ENCODE measurements at regions of chr2 and their contacts with region 1.

Region 1: GRCh38 chr2:25131567-25132298 is 36.6 kb downstream of the POMC start:
- DNase-seq: peak; percentile 28 to 58
- ATAC-seq: no peak
- H3K4me3 ChIP-seq: peak overlapping the region; percentile 34
- H3K27ac ChIP-seq: no peak overlapping the region
- H3K4me1 ChIP-seq: no peaks in the 10 kb centered on the region
- H3K27me3 ChIP-seq: no peaks in the 10 kb centered on the region
- CTCF ChIP-seq: no peak

Region 2: DNA sequence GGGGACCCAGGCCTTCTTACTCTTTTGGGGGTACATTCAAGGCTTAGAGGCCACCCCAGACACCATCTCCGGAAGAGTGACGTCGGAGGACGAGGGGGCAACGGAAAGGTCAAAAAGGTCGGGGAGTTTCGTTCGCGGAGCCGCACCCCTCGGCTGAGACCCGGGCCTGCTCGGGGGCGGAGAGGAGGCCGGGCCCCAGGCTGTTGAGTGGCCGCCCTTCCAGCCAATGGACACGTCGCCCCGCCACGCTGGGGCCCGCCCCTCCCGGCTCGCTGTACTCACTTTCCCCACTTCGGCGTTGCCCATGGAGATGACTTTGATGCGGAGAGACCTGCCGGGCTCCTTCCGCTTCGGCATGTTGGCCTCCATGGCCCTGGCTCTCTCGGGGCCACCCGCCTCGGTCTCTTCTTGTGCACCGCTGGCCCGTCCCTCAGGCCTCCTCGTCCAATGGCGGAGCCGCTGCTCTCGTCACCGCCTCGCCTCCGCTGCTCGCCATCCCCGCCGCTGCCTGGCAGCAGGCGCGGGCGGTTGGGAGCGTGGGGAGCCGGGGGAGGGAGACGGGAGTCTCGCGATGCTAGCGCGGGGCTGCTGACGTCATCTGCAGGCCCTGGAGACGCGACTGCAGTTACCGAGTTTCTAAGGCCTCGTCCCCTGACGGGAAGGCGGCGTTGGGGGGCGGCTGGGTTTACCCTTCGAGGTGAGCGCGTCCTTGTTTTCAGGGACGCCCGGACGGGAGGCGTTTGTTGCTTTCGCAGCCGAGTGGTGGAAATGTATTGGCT is 160.0 kb before region 1 on chr2 and contains the start of gene DNAJC27:
- intact Hi-C with region 1: loop called (anchors 1 to 2 kb)
- DNase-seq: peak; percentile 97 to 99
- ATAC-seq: peak; percentile 92 to 95 (median 94)
- H3K4me3 ChIP-seq: peak within 1 kb of the TSS; percentile 79
- H3K27ac ChIP-seq: peak within 1 kb of the TSS; percentile 99
- H3K4me1 ChIP-seq: peaks cover 6% of the 10 kb centered on the region
- H3K27me3 ChIP-seq: no peaks in the 10 kb centered on the region
- CTCF ChIP-seq: no peak
- total RNA-seq, gene DNAJC27: 4.6 to 8.2 (median 7.1) TPM

Region 3: GRCh38 chr2:25078171-25079049 is 53.3 kb before region 1 on chr2:
- intact Hi-C with region 1: loop called in 1 of 2 experiments (anchors 5 kb)
- DNase-seq: no peak
- ATAC-seq: peak; percentile 59 to 77 (median 67)
- H3K4me3 ChIP-seq: peak overlapping the region; percentile 7
- H3K27ac ChIP-seq: peak overlapping the region; percentile 53
- H3K4me1 ChIP-seq: peaks cover 41% of the 10 kb centered on the region
- H3K27me3 ChIP-seq: no peaks in the 10 kb centered on the region
- CTCF ChIP-seq: no peak